HEK293T (cell line): ENCODE measurements at regions of chr11 and their contacts with region 1.

Region 1: DNA sequence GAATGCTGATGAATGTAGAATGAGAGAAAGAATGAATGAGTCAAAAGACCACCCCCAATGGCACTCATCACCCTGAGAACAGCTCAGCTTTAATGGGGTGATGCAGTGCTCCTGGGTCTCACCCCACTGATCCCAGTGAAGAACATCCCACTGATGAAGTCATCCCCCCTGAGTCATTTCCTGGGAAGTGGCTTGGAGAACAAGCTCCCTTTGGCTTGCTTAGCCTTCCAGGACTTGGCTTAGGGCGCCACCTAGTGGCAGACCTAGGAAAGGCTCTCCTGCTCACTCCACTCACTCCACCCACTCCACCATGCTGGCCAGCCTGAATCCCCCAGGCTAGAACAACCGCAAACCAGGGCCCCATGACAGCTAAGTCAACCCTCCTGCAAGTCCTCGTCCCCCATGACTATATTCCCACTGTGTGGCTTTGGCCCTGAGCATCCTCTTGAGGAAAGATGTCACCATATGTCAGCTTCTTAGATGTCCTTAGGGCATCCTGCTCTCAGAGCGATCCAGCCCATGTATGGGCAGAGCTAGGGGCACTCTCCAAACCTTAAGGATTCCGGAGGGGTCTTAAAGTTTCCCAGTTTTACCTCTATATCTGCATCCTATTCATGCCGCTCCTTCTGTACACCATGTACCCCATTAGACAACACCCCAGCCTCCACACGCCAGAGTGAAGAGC is 17.8 kb upstream of the TMPRSS13 start:
- DNase-seq: peak; percentile 91

Region 2: GRCh38 chr11:117817368-117818040 is 129.5 kb before region 1 on chr11:
- CTCF ChIA-PET with region 1: interaction called, 45 read pairs
- POLR2A ChIA-PET with region 1: interaction called, 4 read pairs
- DNase-seq: peak; percentile 80

Region 3: DNA sequence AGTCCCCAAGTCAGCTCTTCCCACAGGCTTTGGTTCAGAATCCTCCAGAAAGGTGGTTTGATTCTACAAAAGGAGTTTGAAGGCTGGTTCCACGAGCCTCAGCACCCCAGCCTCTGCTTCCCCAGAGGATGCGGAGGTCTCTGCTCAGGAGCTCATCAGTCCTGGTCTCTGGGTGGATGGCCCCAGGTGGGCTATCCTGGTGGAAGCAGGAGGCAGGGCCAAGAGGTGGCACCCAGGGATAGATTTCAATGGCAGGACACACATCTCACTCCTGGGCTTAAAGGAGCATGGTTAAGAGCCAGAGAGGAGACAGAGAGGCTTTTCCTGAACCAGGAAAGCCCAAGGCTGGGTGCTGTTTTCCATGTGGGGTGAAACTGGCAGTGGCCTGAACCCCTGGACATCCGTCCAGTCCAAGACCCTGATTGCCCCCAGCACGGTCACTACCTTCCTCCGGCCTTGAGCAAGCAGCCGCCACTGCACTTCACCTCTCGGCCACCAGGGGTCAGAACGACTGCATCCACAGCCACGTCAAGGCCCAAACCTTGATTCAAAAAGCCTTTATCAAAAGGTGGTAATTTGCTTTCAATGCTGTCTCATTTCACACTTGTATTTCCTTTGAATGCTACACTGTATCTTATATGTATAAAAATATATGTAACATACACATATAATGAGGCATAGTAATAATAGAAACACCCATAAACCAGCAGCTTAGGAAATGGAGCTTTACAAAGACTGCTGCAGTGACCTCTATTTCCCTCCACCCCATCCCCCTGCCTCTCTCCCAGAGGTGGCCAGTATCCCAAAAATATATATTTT is 103.1 kb before region 1 on chr11:
- CTCF ChIA-PET with region 1: interaction called, 25 read pairs
- POLR2A ChIA-PET with region 1: no interaction called
- DNase-seq: peak; percentile 73

Region 4: GRCh38 chr11:117936973-117937372 is 10.0 kb before region 1 on chr11:
- CTCF ChIA-PET with region 1: interaction called, 13 read pairs
- POLR2A ChIA-PET with region 1: no interaction called
- DNase-seq: no peak

Region 5: GRCh38 chr11:118051611-118052461 is 104.9 kb after region 1 on chr11:
- CTCF ChIA-PET with region 1: interaction called, 15 read pairs
- POLR2A ChIA-PET with region 1: interaction called, 3 read pairs
- DNase-seq: no peak